ENCODE measurements at regions of chr2 and their contacts with region 1.

Region 1: DNA sequence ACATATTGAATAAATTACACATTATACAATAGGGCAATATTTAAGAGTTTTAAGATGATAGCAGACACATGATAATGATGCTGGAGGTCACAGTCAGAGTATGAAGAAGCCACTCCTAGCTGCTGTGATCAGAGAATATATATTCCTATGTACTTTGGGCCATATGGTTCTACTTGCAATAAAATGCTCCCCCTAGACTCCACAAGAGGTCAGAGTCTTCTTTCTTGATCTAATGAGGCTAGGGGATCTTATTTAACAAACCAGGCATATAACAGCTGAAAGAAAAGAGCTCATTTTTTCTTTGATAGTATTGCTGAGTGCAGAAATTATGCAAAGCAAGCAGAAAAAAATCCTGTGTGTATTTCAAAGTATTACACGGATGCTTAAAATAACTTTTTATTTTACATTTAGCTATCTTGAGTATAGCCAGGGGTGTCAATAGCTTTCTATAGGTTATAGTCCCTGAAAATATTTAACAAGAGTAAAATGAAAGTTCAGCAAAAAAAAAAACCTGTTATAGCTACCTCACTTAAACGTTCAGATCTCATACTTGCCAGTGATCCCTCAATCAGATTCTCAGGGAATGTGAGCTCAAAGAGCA is 748.7 kb upstream of the CHAC2 start:
- DNase-seq: peak in 2 of 4 donors; percentile 12 to 48
- ATAC-seq: no peak
- H3K4me3 ChIP-seq: no peak overlapping the region
- H3K27ac ChIP-seq: no peak overlapping the region
- H3K4me1 ChIP-seq: no peaks in the 10 kb centered on the region
- H3K27me3 ChIP-seq: no peaks in the 10 kb centered on the region
- CTCF ChIP-seq: no peak

Region 2: GRCh38 chr2:53202063-53202462 is 183.1 kb after region 1 on chr2:
- intact Hi-C with region 1: loop called in 1 of 2 experiments (anchors 10 kb)
- DNase-seq: peak in 2 of 4 donors; percentile 47 to 75
- ATAC-seq: peak; percentile 99
- H3K4me3 ChIP-seq: no peak overlapping the region
- H3K27ac ChIP-seq: no peak overlapping the region
- H3K4me1 ChIP-seq: no peaks in the 10 kb centered on the region
- H3K27me3 ChIP-seq: no peaks in the 10 kb centered on the region
- CTCF ChIP-seq: no peak

Region 3: DNA sequence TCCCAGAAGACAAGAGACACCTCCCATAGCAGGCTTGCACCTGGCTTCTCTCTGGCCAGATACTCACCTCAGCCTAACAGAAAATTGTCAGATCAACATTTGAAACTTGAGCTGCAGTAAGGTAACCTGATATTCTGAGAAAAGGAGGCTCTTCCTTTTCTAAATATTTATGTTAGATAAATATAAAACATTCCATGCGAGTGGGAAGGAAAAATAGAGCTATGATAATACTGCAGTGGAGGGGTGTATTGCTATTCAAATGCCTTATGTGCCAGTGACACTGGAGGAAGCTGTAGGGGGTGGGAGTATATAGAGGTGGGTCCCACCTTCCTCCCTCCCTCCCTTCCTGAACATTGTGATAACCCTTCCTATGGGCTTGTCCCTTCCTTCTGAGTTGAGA is 233.2 kb after region 1 on chr2:
- intact Hi-C with region 1: no loop called
- DNase-seq: no peak
- ATAC-seq: no peak
- H3K4me3 ChIP-seq: no peak overlapping the region
- H3K27ac ChIP-seq: no peak overlapping the region
- H3K4me1 ChIP-seq: no peaks in the 10 kb centered on the region
- H3K27me3 ChIP-seq: no peaks in the 10 kb centered on the region
- CTCF ChIP-seq: no peak

Measured in left lung (tissue), 14 donors.